CD8-positive, alpha-beta T cell (primary cell): ENCODE measurements at regions of chr5 and their contacts with region 1.

Region 1: DNA sequence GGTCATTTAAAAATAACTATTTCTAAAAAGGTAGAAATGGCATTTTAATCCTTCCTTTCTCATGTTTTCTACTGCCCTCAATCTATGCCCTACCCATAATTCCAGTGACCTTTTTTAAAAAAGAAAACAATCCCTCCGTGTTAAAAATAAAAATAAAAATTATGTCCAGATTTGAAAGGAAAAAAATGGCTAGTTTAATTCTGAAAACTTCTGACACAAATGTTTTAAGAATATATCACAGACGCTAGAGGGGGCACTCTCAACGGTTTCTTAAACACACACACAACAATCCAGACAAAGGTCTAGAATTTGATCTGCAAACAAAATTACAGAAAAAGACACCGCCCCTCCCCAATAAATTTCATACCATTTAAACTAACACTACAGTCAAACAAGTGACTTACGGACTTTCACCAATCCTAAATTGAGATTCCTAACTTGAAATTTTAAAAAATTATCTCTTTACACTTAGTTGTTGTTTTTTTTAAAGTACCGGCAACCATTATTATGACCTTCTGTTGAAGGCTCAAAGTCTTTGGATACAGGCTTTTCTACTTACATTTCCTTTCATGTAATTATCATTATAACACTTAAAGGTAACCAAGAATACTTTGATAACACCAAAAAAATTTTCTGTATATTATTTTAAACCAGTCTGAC is 38.2 kb downstream of the CLINT1 start:
- DNase-seq: peak in 3 of 9 experiments; percentile 15 to 62 (median 48)
- ATAC-seq: no peak
- H3K4me3 ChIP-seq: no peak overlapping the region
- H3K4me3 Mint-ChIP-seq: no peak overlapping the region
- H3K27ac ChIP-seq: no peak overlapping the region
- H3K27ac Mint-ChIP-seq: no peak overlapping the region
- H3K4me1 ChIP-seq: no peaks in the 10 kb centered on the region
- H3K4me1 Mint-ChIP-seq: peaks cover 34% of the 10 kb centered on the region
- H3K27me3 ChIP-seq: no peaks in the 10 kb centered on the region
- H3K27me3 Mint-ChIP-seq: no peaks in the 10 kb centered on the region
- CTCF ChIP-seq: peak; percentile 26

Region 2: GRCh38 chr5:157571357-157571827 is 249.3 kb before region 1 on chr5:
- CTCF ChIA-PET with region 1: no interaction called
- POLR2A ChIA-PET with region 1: no interaction called
- intact Hi-C with region 1: no loop called
- DNase-seq: peak in 4 of 9 experiments; percentile 27 to 36 (median 34)
- ATAC-seq: peak; percentile 31
- H3K4me3 ChIP-seq: peak overlapping the region in 1 of 2 experiments; percentile 6
- H3K4me3 Mint-ChIP-seq: peak overlapping the region; percentile 56
- H3K27ac ChIP-seq: no peak overlapping the region
- H3K27ac Mint-ChIP-seq: peak overlapping the region; percentile 70
- H3K4me1 ChIP-seq: no peaks in the 10 kb centered on the region
- H3K4me1 Mint-ChIP-seq: peaks cover 36% of the 10 kb centered on the region
- H3K27me3 ChIP-seq: peaks cover 8 to 10% of the 10 kb centered on the region in 2 experiments
- H3K27me3 Mint-ChIP-seq: peaks cover 10% of the 10 kb centered on the region
- CTCF ChIP-seq: no peak

Region 3: GRCh38 chr5:157917899-157918809 is 97.4 kb after region 1 on chr5:
- CTCF ChIA-PET with region 1: interaction called, 9 read pairs
- POLR2A ChIA-PET with region 1: no interaction called
- intact Hi-C with region 1: loop called (anchors 1 kb)
- DNase-seq: peak; percentile 1 to 64 (median 54)
- ATAC-seq: no peak
- H3K4me3 ChIP-seq: no peak overlapping the region
- H3K4me3 Mint-ChIP-seq: no peak overlapping the region
- H3K27ac ChIP-seq: no peak overlapping the region
- H3K27ac Mint-ChIP-seq: peak overlapping the region; percentile 33
- H3K4me1 ChIP-seq: peaks cover 17% of the 10 kb centered on the region
- H3K4me1 Mint-ChIP-seq: peaks cover 28% of the 10 kb centered on the region
- H3K27me3 ChIP-seq: no peaks in the 10 kb centered on the region
- H3K27me3 Mint-ChIP-seq: no peaks in the 10 kb centered on the region
- CTCF ChIP-seq: peak; percentile 25

Region 4: GRCh38 chr5:157994906-157995519 is 174.3 kb after region 1 on chr5:
- CTCF ChIA-PET with region 1: interaction called, 7 read pairs
- POLR2A ChIA-PET with region 1: no interaction called
- intact Hi-C with region 1: loop called (anchors 1 kb)
- DNase-seq: peak in 7 of 9 experiments; percentile 13 to 64 (median 38)
- ATAC-seq: peak; percentile 71
- H3K4me3 ChIP-seq: no peak overlapping the region
- H3K4me3 Mint-ChIP-seq: no peak overlapping the region
- H3K27ac ChIP-seq: no peak overlapping the region
- H3K27ac Mint-ChIP-seq: no peak overlapping the region
- H3K4me1 ChIP-seq: peaks cover 15% of the 10 kb centered on the region
- H3K4me1 Mint-ChIP-seq: peaks cover 15% of the 10 kb centered on the region
- H3K27me3 ChIP-seq: peaks cover 7 to 17% of the 10 kb centered on the region in 2 experiments
- H3K27me3 Mint-ChIP-seq: peaks cover 31% of the 10 kb centered on the region
- CTCF ChIP-seq: peak; percentile 50

Region 5: GRCh38 chr5:158074992-158075769 is 254.5 kb after region 1 on chr5:
- CTCF ChIA-PET with region 1: interaction called, 6 read pairs
- POLR2A ChIA-PET with region 1: no interaction called
- intact Hi-C with region 1: loop called in 1 of 2 experiments (anchors 10 kb)
- DNase-seq: peak; percentile 7 to 66 (median 39)
- ATAC-seq: peak; percentile 64
- H3K4me3 ChIP-seq: no peak overlapping the region
- H3K4me3 Mint-ChIP-seq: no peak overlapping the region
- H3K27ac ChIP-seq: no peak overlapping the region
- H3K27ac Mint-ChIP-seq: no peak overlapping the region
- H3K4me1 ChIP-seq: no peaks in the 10 kb centered on the region
- H3K4me1 Mint-ChIP-seq: peaks cover 3% of the 10 kb centered on the region
- H3K27me3 ChIP-seq: no peaks in the 10 kb centered on the region
- H3K27me3 Mint-ChIP-seq: peaks cover 7% of the 10 kb centered on the region
- CTCF ChIP-seq: peak; percentile 54

Region 6: GRCh38 chr5:158174918-158175851 is 354.5 kb after region 1 on chr5:
- CTCF ChIA-PET with region 1: no interaction called
- POLR2A ChIA-PET with region 1: no interaction called
- intact Hi-C with region 1: loop called in 1 of 2 experiments (anchors 5 kb)
- DNase-seq: peak; percentile 10 to 66 (median 46)
- ATAC-seq: peak; percentile 44
- H3K4me3 ChIP-seq: no peak overlapping the region
- H3K4me3 Mint-ChIP-seq: no peak overlapping the region
- H3K27ac ChIP-seq: no peak overlapping the region
- H3K27ac Mint-ChIP-seq: no peak overlapping the region
- H3K4me1 ChIP-seq: no peaks in the 10 kb centered on the region
- H3K4me1 Mint-ChIP-seq: peaks cover 3% of the 10 kb centered on the region
- H3K27me3 ChIP-seq: no peaks in the 10 kb centered on the region
- H3K27me3 Mint-ChIP-seq: no peaks in the 10 kb centered on the region
- CTCF ChIP-seq: peak; percentile 56